ENCODE measurements at regions of chrX and their contacts with region 1.

Region 1: GRCh38 chrX:20412871-20413486 is 146.3 kb upstream of the RPS6KA3 start:
- DNase-seq: peak; percentile 33 to 86 (median 70)
- ATAC-seq: peak; percentile 75 to 94 (median 90)
- H3K4me3 ChIP-seq: peak overlapping the region; percentile 1 to 34
- H3K4me3 Mint-ChIP-seq: peak overlapping the region; percentile 17 to 73 (median 65)
- H3K27ac ChIP-seq: peak overlapping the region; percentile 75
- H3K27ac Mint-ChIP-seq: peak overlapping the region; percentile 85 to 94
- H3K4me1 ChIP-seq: peaks cover 19 to 40% of the 10 kb centered on the region in 2 experiments
- H3K4me1 Mint-ChIP-seq: peaks cover 40 to 44% (median 42%) of the 10 kb centered on the region in 3 donors
- H3K27me3 ChIP-seq: no peaks in the 10 kb centered on the region
- H3K27me3 Mint-ChIP-seq: no peaks in the 10 kb centered on the region

Region 2: GRCh38 chrX:19887911-19888879 is 524.8 kb before region 1 on chrX:
- CTCF ChIA-PET with region 1: no interaction called
- POLR2A ChIA-PET with region 1: interaction called in 1 of 2 experiments, 15 read pairs
- DNase-seq: peak in 26 of 35 experiments; percentile 12 to 75 (median 33)
- ATAC-seq: peak; percentile 36 to 56 (median 46)
- H3K4me3 ChIP-seq: peak overlapping the region; percentile 54 to 60
- H3K4me3 Mint-ChIP-seq: peak overlapping the region; percentile 76 to 77 (median 76)
- H3K27ac ChIP-seq: peak overlapping the region; percentile 52
- H3K27ac Mint-ChIP-seq: peak overlapping the region; percentile 66 to 79
- H3K4me1 ChIP-seq: peaks cover 4 to 29% of the 10 kb centered on the region in 2 experiments
- H3K4me1 Mint-ChIP-seq: peaks cover 36 to 45% (median 44%) of the 10 kb centered on the region in 3 donors
- H3K27me3 ChIP-seq: no peaks in the 10 kb centered on the region
- H3K27me3 Mint-ChIP-seq: no peaks in the 10 kb centered on the region

Measured in T-cell (primary cell).